Vagina (tissue), 2 donors: ENCODE measurements at regions of chr1 and their contacts with region 1.

Region 1: DNA sequence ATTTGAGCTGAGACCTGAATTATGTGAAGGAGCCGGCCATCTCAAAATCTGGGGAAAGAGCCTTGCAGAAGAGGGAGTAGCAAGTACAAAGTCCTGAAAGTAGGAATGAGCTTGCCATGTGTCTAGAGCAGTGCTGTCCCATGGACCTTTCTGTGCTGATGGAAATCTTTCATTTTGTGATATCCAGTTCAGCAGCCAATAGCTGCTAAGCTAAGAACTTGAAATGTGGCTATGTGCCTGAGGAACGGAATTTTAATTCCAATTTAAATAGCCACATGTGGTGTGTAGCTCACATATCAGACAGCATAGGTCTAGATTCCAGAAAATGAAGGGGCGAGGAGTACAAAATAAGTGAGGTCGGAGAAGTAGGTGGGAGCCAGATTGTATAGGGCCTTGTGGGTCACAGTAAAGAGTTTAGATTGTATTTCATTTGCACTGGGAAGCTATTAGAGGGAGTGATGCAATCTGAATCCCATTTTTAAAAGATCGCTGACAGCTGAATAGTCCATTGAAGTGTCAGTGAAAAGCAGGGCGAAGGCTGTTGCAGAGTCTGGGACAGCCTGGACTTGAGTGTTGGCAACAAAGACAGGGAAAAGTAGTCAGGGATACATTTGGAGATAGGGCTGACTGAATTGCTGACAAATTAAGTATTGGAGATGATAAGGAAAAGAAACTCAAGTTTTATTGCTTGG is 80.3 kb downstream of the TMEM200B start:
- DNase-seq: no peak
- H3K4me3 ChIP-seq: no peak overlapping the region
- H3K27ac ChIP-seq: no peak overlapping the region
- H3K4me1 ChIP-seq: no peaks in the 10 kb centered on the region
- H3K27me3 ChIP-seq: no peaks in the 10 kb centered on the region
- CTCF ChIP-seq: no peak
- POLR2A ChIP-seq: no peak

Region 2: DNA sequence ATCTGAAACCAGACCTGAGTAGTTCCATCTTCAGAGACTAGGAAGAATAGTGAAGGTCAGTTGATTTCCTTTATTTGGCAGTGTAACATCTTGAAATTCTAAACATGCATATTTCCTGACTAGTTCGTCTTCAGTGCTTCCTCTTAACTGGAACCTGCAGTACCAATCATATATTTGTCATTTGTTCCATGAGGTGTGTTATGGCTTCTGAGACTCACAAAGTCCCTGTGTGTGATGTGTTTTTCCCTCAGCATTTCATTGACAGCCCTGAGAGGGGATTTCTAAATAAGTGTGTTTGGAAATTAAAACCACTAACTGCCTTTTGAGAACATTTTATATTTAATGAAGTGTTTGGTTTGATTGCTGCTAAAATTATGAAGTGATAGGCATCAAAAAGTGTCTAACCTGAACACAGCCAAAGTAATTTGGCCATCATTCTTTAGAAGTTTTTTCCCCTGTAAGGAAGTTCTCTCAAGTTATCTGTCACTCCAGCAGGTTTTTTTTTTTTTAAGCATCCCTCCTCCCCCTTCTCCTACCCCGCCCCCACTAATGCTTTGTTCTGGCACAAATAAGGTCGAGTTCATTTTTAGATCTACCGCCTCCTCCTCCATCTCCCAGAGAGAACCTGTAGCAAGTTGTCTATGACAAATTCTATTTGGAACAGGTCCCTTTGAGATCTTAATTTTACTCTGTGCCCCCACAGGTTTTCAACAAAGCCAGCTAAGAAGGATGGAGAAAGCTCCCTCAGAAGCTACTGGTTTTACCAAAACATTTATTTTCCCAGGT is 18.9 kb after region 1 on chr1:
- intact Hi-C with region 1: no loop called
- DNase-seq: no peak
- H3K4me3 ChIP-seq: no peak overlapping the region
- H3K27ac ChIP-seq: no peak overlapping the region
- H3K4me1 ChIP-seq: no peaks in the 10 kb centered on the region
- H3K27me3 ChIP-seq: no peaks in the 10 kb centered on the region
- CTCF ChIP-seq: no peak
- POLR2A ChIP-seq: no peak

Region 3: DNA sequence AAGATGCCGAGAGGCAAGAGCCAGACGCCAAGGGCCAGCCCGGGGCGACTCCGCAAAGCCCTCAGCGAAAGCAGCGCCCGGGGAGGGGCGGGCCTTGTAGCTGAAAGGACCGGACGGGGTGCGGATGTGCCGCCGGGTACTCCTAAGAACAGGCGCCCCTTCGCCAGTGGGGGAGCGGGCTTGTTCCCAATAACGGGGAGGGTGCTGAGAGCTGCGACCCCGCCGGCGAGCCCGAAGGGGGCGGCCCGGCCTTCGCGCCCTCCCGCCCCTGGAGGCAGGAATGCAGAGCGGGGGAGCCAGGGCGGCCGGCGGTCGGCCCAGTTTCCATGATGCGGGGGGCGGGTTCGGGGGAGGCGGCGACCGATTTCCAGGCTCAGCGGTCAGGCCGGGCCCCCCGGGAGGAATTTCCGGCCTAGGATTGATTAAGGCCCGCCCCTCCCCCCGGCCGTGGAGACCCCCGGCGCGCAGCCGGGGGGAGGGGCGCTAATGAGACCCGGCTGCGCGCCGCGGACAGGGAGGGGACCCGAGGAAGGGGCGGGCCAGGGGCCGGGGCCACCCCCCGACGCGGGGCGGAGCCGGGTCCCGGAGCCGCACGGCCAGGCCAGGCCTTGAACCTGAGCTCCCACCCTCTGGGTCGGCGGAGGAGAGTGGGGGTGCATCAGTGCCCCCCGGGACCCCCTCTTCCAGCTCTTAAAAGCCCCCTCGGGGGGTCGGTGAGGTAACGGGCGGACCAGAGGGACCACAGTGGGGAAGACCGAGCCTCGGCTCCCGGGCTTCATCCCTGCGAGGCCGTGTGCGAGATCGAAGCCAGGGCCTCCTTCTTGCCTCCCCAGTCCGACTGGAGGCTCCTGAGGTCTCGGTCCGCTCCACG is 81.2 kb after region 1 on chr1:
- intact Hi-C with region 1: loop called (anchors 5 kb)
- DNase-seq: peak in 1 of 2 donors; percentile 93
- H3K4me3 ChIP-seq: peak overlapping the region; percentile 67 to 75
- H3K27ac ChIP-seq: peak overlapping the region; percentile 94
- H3K4me1 ChIP-seq: peaks cover 56% of the 10 kb centered on the region
- H3K27me3 ChIP-seq: no peaks in the 10 kb centered on the region
- CTCF ChIP-seq: peak; percentile 43 to 99 (median 59)
- POLR2A ChIP-seq: peak; percentile 72 to 83

Region 4: DNA sequence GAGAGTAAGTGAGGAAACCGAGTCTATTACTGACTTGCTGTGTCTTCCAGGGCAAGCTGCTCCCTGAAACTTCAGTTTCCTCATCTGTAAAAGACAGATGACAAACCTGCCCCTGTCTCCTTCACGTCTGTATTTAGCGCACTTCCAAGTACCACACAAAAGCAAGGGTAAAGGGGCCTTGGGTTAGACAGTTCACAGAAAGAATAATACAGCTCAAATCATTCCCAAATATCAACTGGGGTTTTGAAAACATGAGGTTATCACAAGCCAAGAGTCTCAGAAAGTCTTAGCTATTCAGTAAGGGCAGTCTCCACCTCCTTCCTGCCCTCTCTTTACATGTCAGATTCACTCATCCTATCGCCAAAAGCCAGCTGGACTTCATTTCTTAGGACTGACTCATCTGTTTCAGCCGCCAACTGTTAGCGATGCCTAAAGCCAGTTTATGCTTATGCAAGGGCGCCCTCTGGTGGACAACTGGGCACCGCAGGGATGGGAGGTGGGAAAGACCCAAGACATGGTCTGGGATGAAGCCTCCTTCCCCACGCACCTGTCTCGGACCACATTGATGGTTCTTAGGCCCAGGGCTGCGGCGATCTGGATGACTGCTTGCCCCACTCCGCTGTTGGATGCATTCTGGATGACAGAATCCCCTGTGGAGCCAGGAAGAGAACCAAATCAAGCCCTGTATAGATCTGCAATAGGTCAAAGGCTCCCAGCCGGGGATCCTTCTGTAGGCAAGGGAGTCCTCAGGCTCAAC is 159.3 kb after region 1 on chr1:
- intact Hi-C with region 1: loop called (anchors 10 kb)
- DNase-seq: peak in 1 of 2 donors; percentile 95
- H3K4me3 ChIP-seq: no peak overlapping the region
- H3K27ac ChIP-seq: peak overlapping the region; percentile 77
- H3K4me1 ChIP-seq: peaks cover 12% of the 10 kb centered on the region
- H3K27me3 ChIP-seq: no peaks in the 10 kb centered on the region
- CTCF ChIP-seq: peak; percentile 96 to 99 (median 99)
- POLR2A ChIP-seq: no peak